ENCODE measurements at regions of chr4 and their contacts with region 1.

Region 1: DNA sequence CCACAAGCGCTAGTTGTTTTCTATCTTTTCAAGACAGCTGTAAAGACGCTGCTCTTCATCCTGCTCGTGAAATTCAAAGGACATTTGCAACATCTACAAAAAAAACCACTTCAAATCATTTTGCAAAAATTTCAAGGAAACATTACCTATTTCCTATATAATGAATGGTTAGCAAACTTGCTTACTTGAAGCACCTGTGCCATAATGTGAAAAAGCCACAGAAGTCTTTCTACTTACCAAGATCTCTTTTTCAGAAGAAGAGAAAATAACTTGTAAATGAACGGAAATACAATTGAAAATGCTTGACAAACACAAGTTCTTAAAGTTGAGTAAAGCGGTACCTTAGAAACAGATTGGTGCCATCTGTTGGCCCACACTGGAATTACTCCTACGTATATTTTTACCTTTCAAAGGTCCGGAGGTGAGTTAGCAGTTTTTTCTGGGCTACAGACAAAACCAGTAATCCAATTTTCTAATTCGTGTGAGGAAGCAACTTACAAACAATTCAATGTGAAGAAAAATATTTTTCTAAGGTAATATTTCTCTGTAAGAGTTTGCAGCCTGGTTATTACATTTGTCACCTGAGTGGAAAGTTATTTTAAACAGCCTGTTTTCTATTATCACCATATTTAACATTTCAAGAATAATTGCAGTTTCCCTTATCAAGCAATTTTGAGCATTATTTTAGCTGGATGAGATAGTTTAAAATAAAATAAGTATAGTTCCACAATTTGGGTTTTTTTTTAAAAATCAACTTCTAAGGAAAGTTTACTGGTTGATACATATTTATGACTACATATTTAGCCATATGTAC is at the start of gene TLR6:
- DNase-seq: peak; percentile 61 to 91 (median 77)
- H3K4me3 ChIP-seq: peak within 1 kb of the TSS; percentile 49 to 93 (median 83)
- H3K4me3 Mint-ChIP-seq: peak within 1 kb of the TSS; percentile 72 to 91
- H3K27ac ChIP-seq: peak within 1 kb of the TSS; percentile 97 to 99
- H3K27ac Mint-ChIP-seq: peak within 1 kb of the TSS; percentile 97 to 100 (median 100)
- H3K4me1 ChIP-seq: peaks cover 39 to 63% of the 10 kb centered on the region in 2 donors
- H3K4me1 Mint-ChIP-seq: peaks cover 48% of the 10 kb centered on the region
- H3K27me3 ChIP-seq: no peaks in the 10 kb centered on the region
- H3K27me3 Mint-ChIP-seq: peaks cover 0 to 5% (median 0%) of the 10 kb centered on the region in 3 donors
- CTCF ChIP-seq: peak; percentile 98
- polyA plus RNA-seq, gene TLR6: 7.7 to 12.7 (median 11.5) TPM

Region 2: GRCh38 chr4:38179690-38180377 is 676.9 kb before region 1 on chr4:
- intact Hi-C with region 1: loop called in 1 of 2 experiments (anchors 5 kb)
- DNase-seq: peak; percentile 61 to 74 (median 65)
- H3K4me3 ChIP-seq: no peak overlapping the region
- H3K4me3 Mint-ChIP-seq: no peak overlapping the region
- H3K27ac ChIP-seq: no peak overlapping the region
- H3K27ac Mint-ChIP-seq: peak overlapping the region in 2 of 7 donors; percentile 24 to 56
- H3K4me1 ChIP-seq: peaks cover 33% of the 10 kb centered on the region in 2 donors
- H3K4me1 Mint-ChIP-seq: peaks cover 34% of the 10 kb centered on the region
- H3K27me3 ChIP-seq: no peaks in the 10 kb centered on the region
- H3K27me3 Mint-ChIP-seq: peaks cover 0 to 2% (median 2%) of the 10 kb centered on the region in 3 donors
- CTCF ChIP-seq: peak; percentile 96

Region 3: DNA sequence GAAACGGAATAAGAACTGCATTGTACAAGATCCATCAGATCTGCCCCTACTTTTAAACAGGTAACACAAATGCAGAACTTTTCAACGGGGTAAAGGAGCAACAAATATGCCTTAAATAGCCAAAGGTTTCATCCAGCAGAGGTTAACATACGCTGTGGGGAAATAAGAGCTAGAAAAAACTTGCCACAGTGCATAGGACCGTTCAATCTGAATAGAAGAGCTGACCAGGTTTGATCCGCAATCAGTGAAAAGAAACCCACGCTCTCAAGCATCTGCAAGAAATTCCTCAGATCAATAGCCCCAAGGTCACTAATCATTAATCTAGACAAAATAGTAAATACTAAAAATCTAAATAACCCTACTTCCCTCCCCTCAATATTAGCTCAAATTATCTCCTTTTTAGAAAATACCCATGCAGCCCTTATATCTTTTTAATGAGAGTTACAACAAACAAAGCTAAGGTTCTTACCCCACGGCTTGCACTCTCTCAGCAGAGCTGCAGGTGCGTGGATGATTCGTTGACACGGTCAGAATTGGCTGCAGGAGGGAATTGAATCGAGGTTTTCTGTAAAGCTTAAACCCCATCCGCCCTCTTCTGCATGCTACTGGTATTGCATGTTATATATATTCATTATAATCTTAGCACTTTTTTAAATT is 74.2 kb before region 1 on chr4 and contains the start of gene TLR10:
- intact Hi-C with region 1: loop called in 1 of 2 experiments (anchors 10 kb)
- DNase-seq: peak; percentile 54 to 64 (median 60)
- H3K4me3 ChIP-seq: peak within 1 kb of the TSS in 1 of 3 experiments; percentile 48
- H3K4me3 Mint-ChIP-seq: peak within 1 kb of the TSS in 1 of 2 donors; percentile 80
- H3K27ac ChIP-seq: peak within 1 kb of the TSS in 1 of 2 donors; percentile 37
- H3K27ac Mint-ChIP-seq: peak within 1 kb of the TSS; percentile 37 to 78 (median 63)
- H3K4me1 ChIP-seq: peaks cover 57 to 58% of the 10 kb centered on the region in 2 donors
- H3K4me1 Mint-ChIP-seq: peaks cover 45% of the 10 kb centered on the region
- H3K27me3 ChIP-seq: no peaks in the 10 kb centered on the region
- H3K27me3 Mint-ChIP-seq: peaks cover 0 to 1% (median 0%) of the 10 kb centered on the region in 3 donors
- CTCF ChIP-seq: peak; percentile 90
- polyA plus RNA-seq, gene TLR10: 1.1 to 1.2 (median 1.1) TPM

Region 4: DNA sequence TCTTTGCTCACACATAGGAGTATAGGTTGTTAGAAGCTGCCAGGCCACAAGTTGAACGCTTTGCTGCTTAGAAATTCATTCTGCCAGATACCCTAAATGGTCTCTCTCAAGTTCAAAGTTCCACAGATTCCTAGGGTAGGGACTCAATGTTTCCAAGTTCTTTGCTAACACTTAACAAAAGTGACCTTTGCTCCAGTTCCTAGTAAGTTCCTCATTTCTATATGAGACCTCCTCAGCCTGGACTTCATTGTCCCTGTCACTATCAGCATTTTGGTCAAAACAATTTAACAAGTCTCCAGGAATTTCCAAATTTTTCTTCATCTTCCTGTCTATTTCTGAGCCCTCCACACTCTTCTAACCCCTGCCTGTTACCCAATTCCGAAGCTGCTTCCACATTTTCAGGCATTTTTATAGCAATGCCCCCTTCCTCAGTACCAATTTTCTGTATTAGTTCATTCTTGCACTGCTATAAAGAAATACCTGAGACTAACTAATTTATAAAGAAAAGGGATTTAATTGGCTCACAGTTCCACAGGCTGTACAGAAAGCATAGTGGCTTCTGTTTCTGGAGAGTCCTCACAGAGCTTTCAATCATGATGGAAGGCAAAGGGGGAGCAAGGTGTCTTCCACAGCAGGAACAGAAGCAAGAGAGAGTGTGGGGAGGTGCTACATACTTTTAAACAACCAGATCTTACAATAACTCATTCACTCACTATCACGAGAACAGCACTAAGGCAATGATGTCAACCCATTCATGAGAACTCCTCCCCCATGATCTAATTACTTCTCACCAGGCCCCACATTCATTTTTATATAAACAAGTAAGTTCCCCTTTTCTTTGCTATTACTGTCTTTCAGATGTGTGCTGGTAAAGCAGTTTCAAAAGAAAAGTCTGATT is 40.6 kb before region 1 on chr4:
- intact Hi-C with region 1: loop called in 1 of 2 experiments (anchors 2 kb)
- DNase-seq: peak; percentile 77 to 86 (median 84)
- H3K4me3 ChIP-seq: peak overlapping the region in 2 of 3 experiments; percentile 25 to 60
- H3K4me3 Mint-ChIP-seq: peak overlapping the region; percentile 70 to 84
- H3K27ac ChIP-seq: peak overlapping the region; percentile 41 to 95
- H3K27ac Mint-ChIP-seq: peak overlapping the region; percentile 95 to 99 (median 97)
- H3K4me1 ChIP-seq: peaks cover 51 to 61% of the 10 kb centered on the region in 2 donors
- H3K4me1 Mint-ChIP-seq: peaks cover 67% of the 10 kb centered on the region
- H3K27me3 ChIP-seq: no peaks in the 10 kb centered on the region
- H3K27me3 Mint-ChIP-seq: no peaks in the 10 kb centered on the region
- CTCF ChIP-seq: no peak